ENCODE measurements at regions of chr3 and their contacts with region 1.

Region 1: GRCh38 chr3:52339612-52340011 is 23.5 kb downstream of the DNAH1 start:
- DNase-seq: peak; percentile 76
- CTCF ChIP-seq: peak; percentile 61

Region 2: GRCh38 chr3:52238761-52239701 is 100.6 kb before region 1 on chr3 and contains the start of gene TWF2:
- in situ Hi-C with region 1: loop called (anchors 10 kb)
- DNase-seq: peak; percentile 99
- CTCF ChIP-seq: peak; percentile 47

Region 3: GRCh38 chr3:52291508-52292181 is 48.0 kb before region 1 on chr3:
- in situ Hi-C with region 1: loop called (anchors 5 kb)
- DNase-seq: peak; percentile 79
- CTCF ChIP-seq: peak; percentile 72

Region 4: GRCh38 chr3:52533623-52534280 is 194.1 kb after region 1 on chr3 and contains the start of gene NT5DC2:
- in situ Hi-C with region 1: no loop called
- DNase-seq: peak; percentile 97
- CTCF ChIP-seq: peak; percentile 39

Measured in GM13977 (cell line).